ENCODE measurements at regions of chr5 and their contacts with region 1.

Region 1: GRCh38 chr5:31935702-31936369 is 238.3 kb downstream of the GOLPH3 start:
- DNase-seq: no peak
- H3K4me3 ChIP-seq: peak overlapping the region in 3 of 4 donors; percentile 12 to 30 (median 14)
- H3K27ac ChIP-seq: peak overlapping the region in 1 of 4 donors; percentile 33
- H3K4me1 ChIP-seq: peaks cover 7 to 24% (median 16%) of the 10 kb centered on the region in 4 donors
- H3K27me3 ChIP-seq: no peaks in the 10 kb centered on the region
- CTCF ChIP-seq: no peak
- EP300 ChIP-seq: no peak
- POLR2A ChIP-seq: no peak

Region 2: GRCh38 chr5:32027717-32028321 is 92.0 kb after region 1 on chr5:
- intact Hi-C with region 1: loop called (anchors 5 kb)
- DNase-seq: no peak
- H3K4me3 ChIP-seq: peak overlapping the region; percentile 9 to 19 (median 14)
- H3K27ac ChIP-seq: peak overlapping the region; percentile 56 to 73 (median 69)
- H3K4me1 ChIP-seq: peaks cover 51 to 62% (median 57%) of the 10 kb centered on the region in 4 donors
- H3K27me3 ChIP-seq: no peaks in the 10 kb centered on the region
- CTCF ChIP-seq: no peak
- EP300 ChIP-seq: no peak
- POLR2A ChIP-seq: no peak

Measured in esophagus muscularis mucosa (tissue), 4 donors.